ENCODE measurements at regions of chr1 and their contacts with region 1.

Region 1: GRCh38 chr1:212455803-212456528 is 23.2 kb downstream of the NENF start:
- DNase-seq: peak; percentile 59
- ATAC-seq: peak; percentile 90
- H3K4me3 ChIP-seq: no peak overlapping the region
- H3K27ac ChIP-seq: no peak overlapping the region
- H3K4me1 ChIP-seq: no peaks in the 10 kb centered on the region
- H3K27me3 ChIP-seq: no peaks in the 10 kb centered on the region
- CTCF ChIP-seq: peak; percentile 98

Region 2: GRCh38 chr1:211680752-211681327 is 775.1 kb before region 1 on chr1:
- CTCF ChIA-PET with region 1: interaction called, 10 read pairs
- POLR2A ChIA-PET with region 1: no interaction called
- in situ Hi-C with region 1: no loop called
- intact Hi-C with region 1: loop called (anchors 10 kb)
- DNase-seq: peak; percentile 78
- ATAC-seq: peak; percentile 90
- H3K4me3 ChIP-seq: no peak overlapping the region
- H3K27ac ChIP-seq: peak overlapping the region; percentile 70
- H3K4me1 ChIP-seq: peaks cover 6% of the 10 kb centered on the region; the same call in 1 of the 2 replicates
- H3K27me3 ChIP-seq: no peaks in the 10 kb centered on the region
- CTCF ChIP-seq: peak; percentile 86

Region 3: DNA sequence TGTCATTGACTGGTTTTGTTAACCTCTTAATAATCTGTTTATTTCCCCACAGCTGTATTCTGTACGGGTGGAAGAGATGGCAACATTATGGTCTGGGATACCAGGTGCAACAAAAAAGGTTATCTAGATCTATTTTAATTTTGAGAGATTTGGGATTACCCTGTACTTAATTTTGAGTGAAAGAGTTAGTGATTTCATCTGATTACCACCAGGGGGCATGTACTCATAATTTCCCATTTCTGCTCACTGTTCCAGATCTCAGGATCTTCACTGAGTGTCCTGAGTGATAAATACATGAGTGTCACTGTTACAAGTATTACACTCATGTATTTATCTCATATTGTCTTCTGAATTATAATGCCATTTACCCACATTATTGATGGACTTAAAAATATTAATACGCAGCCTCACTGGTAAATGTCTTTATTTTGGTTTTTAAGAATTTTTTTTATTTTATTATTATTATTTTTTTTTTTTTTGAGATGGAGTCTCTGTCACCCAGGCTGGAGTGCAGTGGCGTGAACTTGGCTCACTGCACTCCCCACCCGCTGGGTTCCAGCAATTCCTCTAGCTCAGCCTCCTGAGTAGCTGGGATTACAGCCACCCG is 393.0 kb before region 1 on chr1:
- CTCF ChIA-PET with region 1: interaction called, 6 read pairs
- POLR2A ChIA-PET with region 1: no interaction called
- in situ Hi-C with region 1: no loop called
- intact Hi-C with region 1: loop called (anchors 5 kb)
- DNase-seq: no peak
- ATAC-seq: peak; percentile 78; the same call in 1 of the 2 replicates
- H3K4me3 ChIP-seq: no peak overlapping the region
- H3K27ac ChIP-seq: no peak overlapping the region
- H3K4me1 ChIP-seq: no peaks in the 10 kb centered on the region
- H3K27me3 ChIP-seq: no peaks in the 10 kb centered on the region
- CTCF ChIP-seq: peak; percentile 70; the same call in 1 of the 2 replicates

Region 4: GRCh38 chr1:212070720-212071302 is 385.2 kb before region 1 on chr1:
- CTCF ChIA-PET with region 1: interaction called, 16 read pairs
- POLR2A ChIA-PET with region 1: no interaction called
- in situ Hi-C with region 1: no loop called
- intact Hi-C with region 1: no loop called
- DNase-seq: no peak
- ATAC-seq: peak; percentile 78
- H3K4me3 ChIP-seq: no peak overlapping the region
- H3K27ac ChIP-seq: no peak overlapping the region
- H3K4me1 ChIP-seq: no peaks in the 10 kb centered on the region
- H3K27me3 ChIP-seq: no peaks in the 10 kb centered on the region
- CTCF ChIP-seq: peak; percentile 65; the same call in 1 of the 2 replicates

Region 5: GRCh38 chr1:212381397-212382035 is 74.5 kb before region 1 on chr1:
- CTCF ChIA-PET with region 1: interaction called, 8 read pairs
- POLR2A ChIA-PET with region 1: no interaction called
- in situ Hi-C with region 1: no loop called
- intact Hi-C with region 1: loop called (anchors 10 kb)
- DNase-seq: no peak
- ATAC-seq: no peak
- H3K4me3 ChIP-seq: no peak overlapping the region
- H3K27ac ChIP-seq: no peak overlapping the region
- H3K4me1 ChIP-seq: no peaks in the 10 kb centered on the region
- H3K27me3 ChIP-seq: no peaks in the 10 kb centered on the region
- CTCF ChIP-seq: no peak

Region 6: GRCh38 chr1:212469701-212470458 is 13.9 kb after region 1 on chr1:
- CTCF ChIA-PET with region 1: interaction called, 11 read pairs
- POLR2A ChIA-PET with region 1: no interaction called
- in situ Hi-C with region 1: no loop called
- intact Hi-C with region 1: no loop called
- DNase-seq: no peak
- ATAC-seq: peak; percentile 89
- H3K4me3 ChIP-seq: no peak overlapping the region
- H3K27ac ChIP-seq: peak overlapping the region; percentile 45; the same call in 1 of the 2 replicates
- H3K4me1 ChIP-seq: peaks cover 17% of the 10 kb centered on the region; the same call in 1 of the 2 replicates
- H3K27me3 ChIP-seq: no peaks in the 10 kb centered on the region
- CTCF ChIP-seq: no peak

Region 7: DNA sequence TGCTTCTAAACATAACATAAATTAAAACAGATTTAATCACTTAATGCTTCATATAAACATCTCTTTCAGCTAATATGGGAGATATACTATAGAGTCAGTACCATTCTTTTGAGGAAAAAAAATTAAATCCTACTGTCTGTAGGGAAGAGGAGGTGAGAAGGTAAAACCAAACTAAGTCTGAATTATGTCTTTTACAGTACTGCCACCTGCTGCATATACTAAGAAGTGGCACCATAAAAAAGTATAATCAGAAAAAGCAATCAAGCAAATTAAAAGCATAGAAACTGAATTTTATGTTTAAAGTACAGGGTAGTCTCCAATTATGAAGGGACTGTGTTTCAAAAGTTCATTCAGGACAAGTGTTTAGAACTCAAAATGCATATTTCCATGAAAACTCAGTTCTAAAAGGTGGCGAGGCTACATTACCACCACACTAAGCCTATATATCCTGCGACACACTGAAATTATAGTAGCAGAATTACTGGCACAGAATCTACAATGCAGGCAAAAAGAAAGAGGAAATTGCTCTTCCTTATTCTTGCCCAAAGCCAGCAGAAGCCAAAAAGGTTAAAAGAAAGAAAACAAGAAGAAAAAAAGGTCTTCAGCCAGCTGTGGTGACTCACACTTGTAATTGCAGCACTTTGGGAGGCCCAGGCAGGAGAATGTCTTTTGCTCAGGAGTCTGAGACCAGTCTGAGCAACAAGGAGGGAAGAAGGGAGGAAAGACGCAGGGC is 326.6 kb after region 1 on chr1:
- CTCF ChIA-PET with region 1: no interaction called
- POLR2A ChIA-PET with region 1: no interaction called
- in situ Hi-C with region 1: no loop called
- intact Hi-C with region 1: loop called (anchors 5 kb)
- DNase-seq: no peak
- ATAC-seq: peak; percentile 68; the same call in 1 of the 2 replicates
- H3K4me3 ChIP-seq: no peak overlapping the region
- H3K27ac ChIP-seq: no peak overlapping the region
- H3K4me1 ChIP-seq: no peaks in the 10 kb centered on the region
- H3K27me3 ChIP-seq: no peaks in the 10 kb centered on the region
- CTCF ChIP-seq: peak; percentile 66

Region 8: DNA sequence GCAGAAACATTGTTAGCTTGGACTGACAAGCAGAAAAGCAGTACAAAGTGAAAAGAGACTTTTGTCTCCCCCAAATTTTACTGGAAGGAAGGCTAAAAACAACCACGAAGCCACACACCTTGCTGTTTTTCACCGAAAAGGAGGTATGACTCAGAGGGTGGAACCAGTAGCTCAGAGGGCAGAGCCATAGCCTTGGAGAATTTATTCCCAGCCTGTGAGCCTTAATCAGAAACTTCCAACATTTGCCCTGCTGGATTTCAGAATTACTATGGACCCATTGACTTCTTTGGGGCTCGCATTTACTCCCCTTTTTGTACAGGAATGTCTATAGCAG is 627.1 kb after region 1 on chr1:
- CTCF ChIA-PET with region 1: no interaction called
- POLR2A ChIA-PET with region 1: no interaction called
- in situ Hi-C with region 1: no loop called
- intact Hi-C with region 1: no loop called
- DNase-seq: no peak
- ATAC-seq: no peak
- H3K4me3 ChIP-seq: no peak overlapping the region
- H3K27ac ChIP-seq: no peak overlapping the region
- H3K4me1 ChIP-seq: no peaks in the 10 kb centered on the region
- H3K27me3 ChIP-seq: no peaks in the 10 kb centered on the region
- CTCF ChIP-seq: no peak

Measured in Panc1 (cell line).